GM13976 (cell line): ENCODE measurements at regions of chr3 and their contacts with region 1.

Region 1: GRCh38 chr3:15405448-15406050 is 21.8 kb downstream of the METTL6 start:
- DNase-seq: peak; percentile 57
- CTCF ChIP-seq: peak; percentile 59

Region 2: DNA sequence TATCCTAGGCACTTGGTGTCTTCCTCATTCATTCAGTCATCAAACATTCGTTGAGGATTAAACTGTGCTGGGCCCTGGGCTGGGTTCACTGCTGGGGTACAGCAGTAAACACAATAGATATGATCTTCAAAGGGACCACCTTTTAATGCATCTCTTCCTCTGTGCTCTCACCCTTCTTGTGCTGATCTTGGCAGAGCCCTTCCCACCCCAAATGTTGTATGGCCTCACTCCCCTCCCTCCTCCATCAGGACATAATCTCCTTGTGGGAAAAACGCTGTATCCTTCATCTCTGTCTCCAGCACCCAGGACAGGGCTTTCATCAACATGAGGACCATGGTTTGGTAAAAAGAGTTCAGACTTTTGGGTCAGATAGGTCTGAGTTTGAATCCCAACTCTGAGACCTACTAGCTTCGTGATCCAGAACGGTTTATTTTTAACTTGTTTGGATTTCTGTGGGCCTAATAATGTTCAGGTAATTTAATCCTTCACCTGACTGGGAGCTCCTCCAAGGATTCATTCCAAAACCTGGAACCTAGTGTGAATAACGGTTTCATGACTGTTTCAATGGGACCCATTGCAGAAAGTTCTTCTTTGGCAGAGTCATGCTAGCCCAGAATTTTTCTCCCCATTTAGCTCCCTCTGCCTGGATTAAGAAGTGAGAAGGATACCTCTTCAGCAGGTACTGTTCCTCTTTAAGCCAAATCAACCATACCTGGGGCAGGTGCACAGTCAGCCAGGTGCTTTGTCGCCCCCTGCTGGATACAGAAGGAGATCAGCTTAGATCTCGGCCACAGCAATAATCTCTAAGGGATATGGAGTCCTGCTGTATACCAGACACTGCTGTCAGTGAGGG is 1520.5 kb before region 1 on chr3:
- in situ Hi-C with region 1: no loop called
- DNase-seq: peak; percentile 76
- CTCF ChIP-seq: peak; percentile 58

Region 3: GRCh38 chr3:14871481-14872200 is 533.9 kb before region 1 on chr3:
- in situ Hi-C with region 1: no loop called
- DNase-seq: no peak
- CTCF ChIP-seq: no peak

Region 4: DNA sequence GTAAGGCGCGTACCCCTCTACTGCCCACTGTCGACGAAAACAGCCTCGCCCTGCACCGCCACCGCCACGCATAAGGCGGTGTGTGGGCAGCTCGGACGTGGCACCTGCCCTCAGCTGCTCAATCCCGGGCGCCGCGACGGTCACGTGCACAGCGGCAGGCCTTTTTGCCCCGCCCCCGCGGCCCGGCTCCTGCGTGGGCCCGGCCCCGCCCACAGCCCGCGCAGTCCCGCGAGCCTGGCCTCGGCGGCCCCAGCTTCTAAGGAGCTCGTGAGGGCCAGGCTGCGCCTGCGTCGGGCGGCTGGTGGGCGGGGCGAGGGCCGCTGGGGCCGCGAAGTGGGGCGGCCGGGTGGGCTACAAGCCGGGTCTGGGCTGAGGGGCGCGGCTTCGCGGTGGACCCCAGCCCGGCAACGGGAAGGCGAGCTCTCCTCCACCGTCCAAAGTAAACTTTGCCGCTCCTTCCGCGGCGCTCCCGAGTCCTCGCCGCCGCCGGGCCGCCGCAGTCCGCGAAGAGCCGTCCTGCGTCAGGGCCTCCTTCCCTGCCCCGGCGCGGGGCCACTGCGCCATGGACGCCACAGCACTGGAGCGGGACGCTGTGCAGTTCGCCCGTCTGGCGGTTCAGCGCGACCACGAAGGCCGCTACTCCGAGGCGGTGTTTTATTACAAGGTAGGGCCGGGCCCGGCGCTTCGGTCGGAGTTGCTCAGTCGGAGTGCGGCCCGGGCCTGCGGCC is 199.5 kb before region 1 on chr3 and contains the start of gene CAPN7:
- in situ Hi-C with region 1: loop called (anchors 10 kb)
- DNase-seq: peak; percentile 97
- CTCF ChIP-seq: peak; percentile 24

Region 5: GRCh38 chr3:15557511-15557946 is 152.0 kb after region 1 on chr3:
- in situ Hi-C with region 1: loop called (anchors 10 kb)
- DNase-seq: peak; percentile 32
- CTCF ChIP-seq: peak; percentile 24